Ascending aorta (tissue), 2 donors: ENCODE measurements at regions of chr10 and their contacts with region 1.

Region 1: GRCh38 chr10:115092555-115093285 is 445 bp upstream of the ATRNL1 start:
- DNase-seq: no peak
- H3K4me3 ChIP-seq: peak overlapping the region; percentile 80 to 92
- H3K27ac ChIP-seq: peak overlapping the region; percentile 52 to 94
- H3K4me1 ChIP-seq: peaks cover 0 to 4% of the 10 kb centered on the region in 2 donors
- H3K27me3 ChIP-seq: no peaks in the 10 kb centered on the region
- CTCF ChIP-seq: no peak

Region 2: DNA sequence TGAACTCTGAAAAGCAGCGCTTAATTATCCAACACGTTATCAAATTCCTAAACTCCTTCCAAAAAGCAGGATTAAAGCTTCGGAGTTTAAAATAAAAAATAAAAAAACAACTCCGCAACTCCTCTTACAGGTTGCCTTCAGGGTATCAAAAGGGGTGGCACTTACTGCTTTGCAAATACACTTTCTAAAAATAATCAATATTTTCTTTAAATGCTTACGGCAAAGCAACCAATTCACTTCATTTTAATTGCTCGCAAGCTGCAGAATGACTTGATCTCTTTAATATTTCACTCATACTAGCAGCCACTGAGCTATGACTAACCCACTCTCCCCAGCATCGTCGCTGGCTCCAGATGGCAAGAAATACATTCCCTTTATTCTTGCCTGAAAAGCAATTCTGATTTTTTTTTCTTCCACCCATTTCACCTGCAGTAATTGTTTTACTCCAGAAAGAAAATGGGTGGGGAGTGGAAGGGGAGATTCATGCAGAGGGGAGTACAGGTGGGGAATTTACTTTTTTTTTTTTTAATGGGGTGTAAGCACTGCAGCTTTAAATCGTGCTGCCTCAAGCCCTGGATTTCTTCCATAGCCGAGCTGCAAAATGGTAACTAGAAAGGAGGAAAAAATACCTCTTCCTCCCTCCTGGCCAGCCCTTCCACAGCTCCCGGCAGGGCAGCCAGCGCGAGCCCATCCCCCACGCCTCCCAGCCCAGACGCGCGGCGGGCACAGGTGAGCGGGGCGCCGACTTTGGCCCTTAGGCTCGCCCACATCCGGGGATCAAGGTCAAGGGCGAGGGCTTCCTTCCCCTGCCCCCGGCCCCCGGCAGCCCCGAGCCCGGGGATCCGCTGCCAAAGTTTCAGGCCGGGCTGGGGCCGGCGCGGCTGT is 325.4 kb before region 1 on chr10:
- intact Hi-C with region 1: loop called (anchors 5 kb)
- DNase-seq: no peak
- H3K4me3 ChIP-seq: peak overlapping the region; percentile 83 to 84
- H3K27ac ChIP-seq: peak overlapping the region; percentile 48 to 49
- H3K4me1 ChIP-seq: peaks cover 4 to 8% of the 10 kb centered on the region in 2 donors
- H3K27me3 ChIP-seq: no peaks in the 10 kb centered on the region
- CTCF ChIP-seq: no peak

Region 3: DNA sequence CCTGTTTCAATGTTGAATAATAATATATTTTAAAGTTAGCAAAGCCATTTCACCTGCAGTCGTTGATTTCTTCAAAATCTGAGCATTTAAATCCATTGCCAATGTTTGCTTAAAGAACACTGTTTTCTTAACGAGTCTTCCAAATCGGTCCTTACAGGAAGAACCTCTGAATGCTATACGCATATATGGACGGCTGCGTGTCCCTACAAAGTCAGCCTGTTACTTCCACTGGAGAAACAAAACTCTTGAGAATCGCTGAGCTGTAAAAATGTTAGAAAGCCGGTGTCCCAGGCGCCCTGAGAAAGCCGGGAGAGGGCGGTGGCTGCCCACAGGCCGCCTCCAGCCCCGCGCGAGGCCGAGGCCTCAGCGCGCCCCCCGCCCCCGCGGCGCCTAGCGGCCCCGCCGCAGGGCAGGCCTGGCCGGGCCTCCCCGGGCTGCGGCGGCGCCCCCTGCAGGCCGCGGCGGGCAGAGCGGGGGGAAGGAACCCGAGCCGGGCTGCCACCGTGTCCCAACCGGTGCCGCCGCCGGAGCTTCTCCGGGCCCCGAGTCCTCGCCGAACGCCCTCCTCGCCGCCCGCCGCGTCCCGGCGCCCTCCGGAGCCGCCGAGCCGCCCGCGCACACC is 271.3 kb before region 1 on chr10 and contains the start of gene FHIP2A:
- intact Hi-C with region 1: loop called (anchors 5 kb)
- DNase-seq: peak; percentile 43 to 87
- H3K4me3 ChIP-seq: peak within 1 kb of the TSS; percentile 99
- H3K27ac ChIP-seq: peak within 1 kb of the TSS; percentile 94 to 100
- H3K4me1 ChIP-seq: peaks cover 3 to 17% of the 10 kb centered on the region in 2 donors
- H3K27me3 ChIP-seq: no peaks in the 10 kb centered on the region
- CTCF ChIP-seq: peak; percentile 14 to 88 (median 35)
- total RNA-seq, gene FHIP2A: 19.6 TPM

Region 4: DNA sequence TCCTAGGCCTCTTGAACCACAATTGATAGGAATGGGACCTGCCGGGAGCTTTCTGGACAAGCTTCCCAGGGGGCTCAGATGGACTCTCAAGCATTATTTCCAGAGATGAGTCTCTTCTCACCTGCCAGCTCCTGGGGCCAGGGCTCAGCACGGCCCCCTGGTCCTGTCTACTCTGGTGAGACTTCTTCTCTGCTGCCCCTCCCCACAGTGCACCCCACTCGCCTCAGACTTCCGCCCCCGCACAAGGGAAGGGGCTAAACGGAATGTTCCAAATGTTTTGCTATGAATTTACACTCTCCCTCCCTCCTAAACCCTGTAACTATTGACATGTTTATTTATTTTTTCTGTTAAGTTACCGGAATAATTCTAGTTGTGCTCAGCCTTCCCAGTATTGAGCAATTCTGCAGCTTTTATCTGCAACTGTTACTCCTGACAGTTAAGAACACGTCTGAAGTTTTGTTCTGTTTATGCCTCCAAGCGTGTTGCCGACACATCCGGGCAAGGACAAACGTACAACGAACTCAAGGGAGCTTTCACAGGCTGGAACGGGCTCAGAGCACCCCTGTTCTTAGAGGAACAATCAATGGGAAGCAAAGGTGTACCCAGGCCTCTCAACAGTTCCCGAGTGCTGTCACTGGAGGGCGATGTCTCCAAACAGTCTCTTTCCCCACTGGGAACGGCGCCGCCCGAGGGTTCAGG is 216.0 kb before region 1 on chr10:
- intact Hi-C with region 1: loop called (anchors 10 kb)
- DNase-seq: peak in 1 of 2 donors; percentile 79
- H3K4me3 ChIP-seq: no peak overlapping the region
- H3K27ac ChIP-seq: no peak overlapping the region
- H3K4me1 ChIP-seq: no peaks in the 10 kb centered on the region
- H3K27me3 ChIP-seq: no peaks in the 10 kb centered on the region
- CTCF ChIP-seq: peak; percentile 47 to 83 (median 74)

Region 5: DNA sequence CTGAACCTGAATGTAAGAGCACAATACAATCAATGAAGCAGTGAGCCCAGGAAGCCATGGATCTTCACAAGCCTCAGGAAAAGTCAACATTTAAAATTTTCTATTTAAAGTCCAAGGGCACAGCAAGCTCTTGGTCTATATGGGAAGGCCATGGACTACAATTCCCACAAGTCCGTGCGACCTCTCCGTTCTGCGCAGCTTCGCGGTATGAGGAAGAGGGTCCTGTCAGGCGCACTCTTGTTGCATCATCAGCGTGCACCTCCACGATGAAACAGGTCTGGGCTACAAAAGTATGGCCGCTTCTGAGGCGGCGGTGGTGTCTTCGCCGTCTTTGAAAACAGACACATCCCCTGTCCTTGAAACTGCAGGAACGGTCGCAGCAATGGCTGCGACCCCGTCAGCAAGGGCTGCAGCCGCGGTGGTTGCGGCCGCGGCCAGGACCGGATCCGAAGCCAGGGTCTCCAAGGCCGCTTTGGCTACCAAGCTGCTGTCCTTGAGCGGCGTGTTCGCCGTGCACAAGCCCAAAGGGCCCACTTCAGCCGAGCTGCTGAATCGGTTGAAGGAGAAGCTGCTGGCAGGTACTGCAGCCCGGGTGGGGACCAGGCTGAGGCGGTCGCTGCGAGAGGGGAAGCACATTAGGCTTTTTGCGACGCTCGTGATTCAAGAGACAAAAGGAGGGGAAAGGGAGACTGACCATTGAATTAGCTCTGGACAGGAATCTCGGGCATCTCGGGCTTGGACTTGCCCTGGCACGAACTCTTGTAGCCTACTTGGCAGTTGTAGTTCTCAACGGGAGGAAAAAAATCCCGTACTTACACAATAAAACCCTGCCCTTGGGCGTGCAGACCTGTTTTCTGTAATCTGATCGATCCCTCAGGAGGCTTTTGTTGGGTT is 154.5 kb before region 1 on chr10 and contains the start of gene TRUB1:
- intact Hi-C with region 1: loop called (anchors 1 kb)
- DNase-seq: peak; percentile 80 to 97
- H3K4me3 ChIP-seq: peak within 1 kb of the TSS; percentile 88 to 97
- H3K27ac ChIP-seq: peak within 1 kb of the TSS; percentile 76 to 81
- H3K4me1 ChIP-seq: peaks cover 3 to 8% of the 10 kb centered on the region in 2 donors
- H3K27me3 ChIP-seq: no peaks in the 10 kb centered on the region
- CTCF ChIP-seq: no peak
- total RNA-seq, gene TRUB1: 5.4 TPM

Region 6: GRCh38 chr10:115001506-115002381 is 91.0 kb before region 1 on chr10:
- intact Hi-C with region 1: loop called (anchors 1 kb)
- DNase-seq: no peak
- H3K4me3 ChIP-seq: peak overlapping the region; percentile 12 to 53
- H3K27ac ChIP-seq: peak overlapping the region; percentile 70 to 84
- H3K4me1 ChIP-seq: peaks cover 0 to 5% of the 10 kb centered on the region in 2 donors
- H3K27me3 ChIP-seq: no peaks in the 10 kb centered on the region
- CTCF ChIP-seq: no peak

Region 7: DNA sequence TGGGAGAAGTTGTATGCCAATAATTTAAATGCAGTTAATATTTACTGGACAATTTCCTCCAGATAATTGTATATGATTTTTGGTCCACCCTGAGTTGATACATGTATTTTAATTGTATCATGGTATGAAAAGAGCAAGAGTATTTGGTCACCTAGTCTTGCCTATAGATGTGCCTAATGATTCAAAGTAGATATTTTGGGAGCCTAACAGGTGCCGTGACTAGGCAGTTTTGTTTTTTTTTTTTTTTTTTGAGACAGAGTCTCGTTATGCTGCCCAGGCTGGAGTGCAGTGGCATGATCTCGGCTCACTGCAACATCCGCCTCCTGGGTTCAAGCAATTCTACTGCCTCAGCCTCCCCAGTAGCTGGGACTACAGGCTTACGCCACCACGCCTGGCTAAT is 58.8 kb before region 1 on chr10:
- intact Hi-C with region 1: no loop called
- DNase-seq: no peak
- H3K4me3 ChIP-seq: no peak overlapping the region
- H3K27ac ChIP-seq: no peak overlapping the region
- H3K4me1 ChIP-seq: peaks cover 0 to 2% of the 10 kb centered on the region in 2 donors
- H3K27me3 ChIP-seq: no peaks in the 10 kb centered on the region
- CTCF ChIP-seq: no peak